AG04450 (cell line): ENCODE measurements at regions of chr7 and their contacts with region 1.

Region 1: GRCh38 chr7:100874577-100875355 is at the start of gene SRRT:
- DNase-seq: peak; percentile 95
- H3K4me3 ChIP-seq: peak within 1 kb of the TSS; percentile 93
- H3K27ac ChIP-seq: peak within 1 kb of the TSS; percentile 86
- H3K27me3 ChIP-seq: no peaks in the 10 kb centered on the region
- CTCF ChIP-seq: peak; percentile 31; the same call in 1 of the 2 replicates
- polyA plus RNA-seq, gene SRRT: 42.4 and 51.8 TPM in 2 replicates

Region 2: DNA sequence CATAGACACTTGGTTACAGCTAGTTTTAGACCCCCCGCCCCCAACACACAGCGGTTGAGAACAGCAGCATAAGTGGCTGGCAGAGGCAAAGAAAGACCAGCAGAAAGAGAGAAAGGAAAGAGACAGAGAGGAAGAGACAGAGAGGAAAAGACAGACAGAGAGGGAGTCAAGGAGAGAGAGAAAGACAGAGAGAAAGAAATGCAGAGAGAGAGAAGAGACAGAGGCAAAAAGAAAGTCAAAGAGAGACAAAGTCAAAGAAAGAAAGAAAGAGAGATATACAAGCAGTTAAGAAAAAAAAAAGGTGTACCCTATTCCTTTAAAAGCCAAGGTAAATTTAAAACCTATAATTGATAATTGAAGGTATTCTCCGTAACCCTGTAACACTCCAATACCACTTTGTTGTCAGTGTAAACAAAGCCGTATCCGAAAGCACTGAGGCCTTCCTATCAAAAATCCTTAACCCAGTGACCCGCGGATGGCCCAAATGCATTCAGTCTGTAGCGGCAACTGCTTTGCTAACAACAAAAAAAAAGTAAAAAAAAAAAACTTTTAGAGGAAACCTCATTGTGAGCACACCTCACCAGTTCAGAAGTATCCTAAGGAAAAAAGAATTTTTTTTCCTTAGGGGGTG is 34.2 kb before region 1 on chr7:
- CTCF ChIA-PET with region 1: no interaction called
- POLR2A ChIA-PET with region 1: no interaction called
- DNase-seq: no peak
- H3K4me3 ChIP-seq: no peak overlapping the region
- H3K27ac ChIP-seq: no peak overlapping the region
- H3K27me3 ChIP-seq: no peaks in the 10 kb centered on the region
- CTCF ChIP-seq: no peak

Region 3: GRCh38 chr7:100889761-100890634 is 15.2 kb after region 1 on chr7:
- CTCF ChIA-PET with region 1: interaction called, 5 read pairs
- POLR2A ChIA-PET with region 1: interaction called, 71 read pairs
- DNase-seq: peak; percentile 85
- H3K4me3 ChIP-seq: peak overlapping the region; percentile 63
- H3K27ac ChIP-seq: peak overlapping the region; percentile 75
- H3K27me3 ChIP-seq: peaks cover 2% of the 10 kb centered on the region
- CTCF ChIP-seq: no peak

Region 4: DNA sequence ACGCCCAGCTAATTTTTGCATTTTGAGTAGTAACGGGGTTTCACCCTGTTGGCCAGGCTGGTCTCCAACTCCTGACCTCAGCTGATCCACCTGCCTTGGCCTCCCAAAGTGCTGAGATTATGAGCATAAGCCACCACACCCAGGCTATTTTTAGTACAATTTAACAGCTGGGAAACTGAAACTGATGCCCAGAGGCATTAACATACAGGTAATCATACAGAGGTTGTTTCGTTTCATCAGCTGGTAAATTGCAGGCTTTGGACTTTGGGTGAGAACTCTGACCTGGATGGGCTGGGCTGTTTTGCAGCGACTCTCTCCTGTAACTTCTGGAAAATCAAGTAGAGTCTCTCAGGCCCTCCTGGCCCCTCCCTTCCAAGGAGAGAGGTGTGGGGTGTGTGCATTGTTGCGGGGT is 27.2 kb after region 1 on chr7:
- CTCF ChIA-PET with region 1: no interaction called
- POLR2A ChIA-PET with region 1: no interaction called
- DNase-seq: no peak
- H3K4me3 ChIP-seq: no peak overlapping the region
- H3K27ac ChIP-seq: no peak overlapping the region
- H3K27me3 ChIP-seq: peaks cover 22% of the 10 kb centered on the region
- CTCF ChIP-seq: no peak

Region 5: GRCh38 chr7:101783381-101784181 is 908.8 kb after region 1 on chr7:
- CTCF ChIA-PET with region 1: no interaction called
- POLR2A ChIA-PET with region 1: no interaction called
- DNase-seq: no peak
- H3K4me3 ChIP-seq: no peak overlapping the region
- H3K27ac ChIP-seq: no peak overlapping the region
- H3K27me3 ChIP-seq: peaks cover 25% of the 10 kb centered on the region
- CTCF ChIP-seq: no peak

Region 6: GRCh38 chr7:102008535-102009345 is 1134.0 kb after region 1 on chr7:
- CTCF ChIA-PET with region 1: no interaction called
- POLR2A ChIA-PET with region 1: no interaction called
- DNase-seq: no peak
- H3K4me3 ChIP-seq: no peak overlapping the region
- H3K27ac ChIP-seq: no peak overlapping the region
- H3K27me3 ChIP-seq: no peaks in the 10 kb centered on the region
- CTCF ChIP-seq: no peak